CD8-positive, alpha-beta T cell (primary cell): ENCODE measurements at regions of chr11 and their contacts with region 1.

Region 1: GRCh38 chr11:65432686-65433582 is 10.3 kb downstream of the NEAT1 start:
- DNase-seq: peak in 2 of 9 experiments; percentile 70 to 81
- ATAC-seq: peak; percentile 31
- H3K4me3 ChIP-seq: no peak overlapping the region
- H3K4me3 Mint-ChIP-seq: no peak overlapping the region
- H3K27ac ChIP-seq: no peak overlapping the region
- H3K27ac Mint-ChIP-seq: peak overlapping the region; percentile 81
- H3K4me1 ChIP-seq: peaks cover 58% of the 10 kb centered on the region
- H3K4me1 Mint-ChIP-seq: peaks cover 79% of the 10 kb centered on the region
- H3K27me3 ChIP-seq: no peaks in the 10 kb centered on the region
- H3K27me3 Mint-ChIP-seq: no peaks in the 10 kb centered on the region
- CTCF ChIP-seq: peak; percentile 71

Region 2: GRCh38 chr11:65016697-65017096 is 416.2 kb before region 1 on chr11:
- CTCF ChIA-PET with region 1: no interaction called
- POLR2A ChIA-PET with region 1: no interaction called
- intact Hi-C with region 1: no loop called
- DNase-seq: no peak
- ATAC-seq: no peak
- H3K4me3 ChIP-seq: no peak overlapping the region
- H3K4me3 Mint-ChIP-seq: no peak overlapping the region
- H3K27ac ChIP-seq: no peak overlapping the region
- H3K27ac Mint-ChIP-seq: no peak overlapping the region
- H3K4me1 ChIP-seq: peaks cover 24% of the 10 kb centered on the region
- H3K4me1 Mint-ChIP-seq: peaks cover 24% of the 10 kb centered on the region
- H3K27me3 ChIP-seq: no peaks in the 10 kb centered on the region
- H3K27me3 Mint-ChIP-seq: no peaks in the 10 kb centered on the region
- CTCF ChIP-seq: no peak

Region 3: GRCh38 chr11:65366340-65366773 is 66.6 kb before region 1 on chr11:
- CTCF ChIA-PET with region 1: interaction called, 4 read pairs
- POLR2A ChIA-PET with region 1: no interaction called
- intact Hi-C with region 1: loop called in 1 of 2 experiments (anchors 1 kb)
- DNase-seq: peak in 3 of 9 experiments; percentile 31 to 80 (median 70)
- ATAC-seq: peak; percentile 92
- H3K4me3 ChIP-seq: no peak overlapping the region
- H3K4me3 Mint-ChIP-seq: no peak overlapping the region
- H3K27ac ChIP-seq: no peak overlapping the region
- H3K27ac Mint-ChIP-seq: no peak overlapping the region
- H3K4me1 ChIP-seq: peaks cover 6% of the 10 kb centered on the region
- H3K4me1 Mint-ChIP-seq: peaks cover 5% of the 10 kb centered on the region
- H3K27me3 ChIP-seq: no peaks in the 10 kb centered on the region
- H3K27me3 Mint-ChIP-seq: no peaks in the 10 kb centered on the region
- CTCF ChIP-seq: peak; percentile 81

Region 4: GRCh38 chr11:65382033-65382807 is 50.7 kb before region 1 on chr11 and contains the start of gene SLC25A45:
- CTCF ChIA-PET with region 1: interaction called, 4 read pairs
- POLR2A ChIA-PET with region 1: interaction called, 4 read pairs
- intact Hi-C with region 1: loop called (anchors 1 kb)
- DNase-seq: peak; percentile 77 to 96 (median 92)
- ATAC-seq: peak; percentile 83
- H3K4me3 ChIP-seq: peak within 1 kb of the TSS; percentile 60 to 98
- H3K4me3 Mint-ChIP-seq: peak within 1 kb of the TSS; percentile 87
- H3K27ac ChIP-seq: peak within 1 kb of the TSS; percentile 97 to 100
- H3K27ac Mint-ChIP-seq: peak within 1 kb of the TSS; percentile 99
- H3K4me1 ChIP-seq: peaks cover 54% of the 10 kb centered on the region
- H3K4me1 Mint-ChIP-seq: peaks cover 42% of the 10 kb centered on the region
- H3K27me3 ChIP-seq: no peaks in the 10 kb centered on the region
- H3K27me3 Mint-ChIP-seq: no peaks in the 10 kb centered on the region
- CTCF ChIP-seq: peak; percentile 81
- total RNA-seq, gene SLC25A45: 27.8 to 29.6 TPM

Region 5: GRCh38 chr11:65403607-65404121 is 29.3 kb before region 1 on chr11:
- CTCF ChIA-PET with region 1: interaction called, 3 read pairs
- POLR2A ChIA-PET with region 1: interaction called, 3 read pairs
- intact Hi-C with region 1: loop called in 1 of 2 experiments (anchors 5 kb)
- DNase-seq: peak in 2 of 9 experiments; percentile 15 to 34
- ATAC-seq: no peak
- H3K4me3 ChIP-seq: no peak overlapping the region
- H3K4me3 Mint-ChIP-seq: no peak overlapping the region
- H3K27ac ChIP-seq: no peak overlapping the region
- H3K27ac Mint-ChIP-seq: peak overlapping the region; percentile 64
- H3K4me1 ChIP-seq: no peaks in the 10 kb centered on the region
- H3K4me1 Mint-ChIP-seq: peaks cover 5% of the 10 kb centered on the region
- H3K27me3 ChIP-seq: no peaks in the 10 kb centered on the region
- H3K27me3 Mint-ChIP-seq: no peaks in the 10 kb centered on the region
- CTCF ChIP-seq: no peak

Region 6: GRCh38 chr11:65454696-65455456 is 21.9 kb after region 1 on chr11:
- CTCF ChIA-PET with region 1: no interaction called
- POLR2A ChIA-PET with region 1: no interaction called
- intact Hi-C with region 1: loop called in 1 of 2 experiments (anchors 2 kb)
- DNase-seq: peak; percentile 51 to 89 (median 82)
- ATAC-seq: peak; percentile 86
- H3K4me3 ChIP-seq: peak overlapping the region; percentile 74 to 87
- H3K4me3 Mint-ChIP-seq: peak overlapping the region; percentile 85
- H3K27ac ChIP-seq: peak overlapping the region; percentile 47 to 68
- H3K27ac Mint-ChIP-seq: peak overlapping the region; percentile 85
- H3K4me1 ChIP-seq: peaks cover 12% of the 10 kb centered on the region
- H3K4me1 Mint-ChIP-seq: peaks cover 23% of the 10 kb centered on the region
- H3K27me3 ChIP-seq: peaks cover 0 to under 1% of the 10 kb centered on the region in 2 experiments
- H3K27me3 Mint-ChIP-seq: no peaks in the 10 kb centered on the region
- CTCF ChIP-seq: no peak

Region 7: DNA sequence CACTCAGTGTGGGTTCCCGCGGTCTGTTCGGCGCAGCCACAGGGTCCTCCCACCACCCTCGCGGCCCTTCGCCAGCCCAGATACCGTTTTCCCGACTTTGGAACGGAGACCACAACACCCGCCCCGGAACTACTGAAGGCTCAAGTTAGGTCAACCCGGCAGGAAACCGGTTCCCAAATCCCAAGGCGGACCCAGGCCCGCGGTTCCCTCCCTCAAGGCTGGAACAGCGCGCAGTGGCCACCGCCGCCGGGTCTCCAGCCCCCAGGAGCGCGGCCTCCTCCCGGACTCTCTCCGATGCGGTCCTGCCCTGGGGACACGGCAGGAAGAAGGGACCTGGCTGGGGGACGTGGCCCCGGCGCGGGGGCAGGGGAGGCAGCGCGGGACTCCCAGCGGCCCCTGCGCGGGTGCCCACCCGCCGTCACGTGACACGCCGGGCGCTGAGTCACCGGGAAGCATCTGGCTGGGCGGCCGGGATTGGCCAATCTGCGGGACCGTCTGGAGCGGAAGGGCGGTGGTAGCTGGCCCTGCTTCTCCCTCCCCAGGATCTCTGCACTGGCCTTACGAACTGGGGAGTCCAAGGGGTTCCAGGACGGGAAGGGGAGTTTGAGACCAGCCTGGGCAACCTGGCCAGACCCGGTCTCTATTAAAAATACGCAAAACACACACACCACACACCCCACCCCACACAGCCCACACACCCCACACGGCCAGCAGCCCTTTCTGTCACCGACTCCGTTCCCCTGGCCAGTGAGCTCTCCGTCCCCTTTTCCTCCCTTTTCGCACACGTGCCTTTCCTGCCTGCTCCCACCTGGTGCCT is 44.4 kb after region 1 on chr11:
- CTCF ChIA-PET with region 1: no interaction called
- POLR2A ChIA-PET with region 1: no interaction called
- intact Hi-C with region 1: loop called in 1 of 2 experiments (anchors 1 kb)
- DNase-seq: peak; percentile 71 to 94 (median 91)
- ATAC-seq: peak; percentile 78
- H3K4me3 ChIP-seq: peak overlapping the region; percentile 89 to 92
- H3K4me3 Mint-ChIP-seq: peak overlapping the region; percentile 100
- H3K27ac ChIP-seq: peak overlapping the region; percentile 89 to 98
- H3K27ac Mint-ChIP-seq: peak overlapping the region; percentile 100
- H3K4me1 ChIP-seq: peaks cover 12% of the 10 kb centered on the region
- H3K4me1 Mint-ChIP-seq: peaks cover 21% of the 10 kb centered on the region
- H3K27me3 ChIP-seq: no peaks in the 10 kb centered on the region
- H3K27me3 Mint-ChIP-seq: no peaks in the 10 kb centered on the region
- CTCF ChIP-seq: no peak